A549 (cell line): ENCODE measurements at regions of chr1 and their contacts with region 1.

Region 1: GRCh38 chr1:47262787-47263413 is 30.9 kb upstream of the TAL1 start:
- DNase-seq: peak; percentile 48 to 50
- ATAC-seq: peak; percentile 56 to 73; a peak in 4 of 6 replicates
- H3K4me3 ChIP-seq: no peak overlapping the region
- H3K27ac ChIP-seq: no peak overlapping the region
- H3K4me1 ChIP-seq: no peaks in the 10 kb centered on the region
- CTCF ChIP-seq: peak; percentile 65
- EP300 ChIP-seq: no peak
- POLR2A ChIP-seq: no peak
- RAD21 ChIP-seq: peak; percentile 53 to 55

Region 2: DNA sequence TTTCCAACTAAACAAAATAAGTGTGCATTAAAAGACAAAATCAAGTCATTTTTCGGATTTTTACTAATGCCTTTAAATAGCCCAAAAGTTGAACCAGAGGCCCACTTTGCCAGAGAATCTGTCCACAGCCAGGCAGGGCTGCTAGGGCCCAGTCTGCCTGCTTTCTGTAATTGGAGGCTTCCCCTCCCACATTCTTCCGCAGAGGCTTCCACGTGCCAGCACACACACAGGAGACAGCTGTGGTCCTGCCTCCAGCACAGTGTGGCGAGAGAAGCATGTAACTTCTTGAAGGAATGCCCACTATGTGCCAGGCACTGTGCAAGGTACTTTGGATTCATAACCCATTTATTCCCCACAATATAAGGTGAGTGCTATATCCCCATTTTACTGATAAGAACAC is 61.7 kb before region 1 on chr1:
- CTCF ChIA-PET with region 1: interaction called, 11 read pairs
- POLR2A ChIA-PET with region 1: no interaction called
- DNase-seq: no peak
- ATAC-seq: no peak
- H3K4me3 ChIP-seq: no peak overlapping the region
- H3K27ac ChIP-seq: no peak overlapping the region
- H3K4me1 ChIP-seq: no peaks in the 10 kb centered on the region; the same call in 2 of the 3 replicates
- CTCF ChIP-seq: no peak
- EP300 ChIP-seq: no peak
- POLR2A ChIP-seq: no peak
- RAD21 ChIP-seq: no peak